ENCODE measurements at regions of chrX and their contacts with region 1.

Region 1: GRCh38 chrX:131841496-131842410 is 181.3 kb upstream of the STK26 start:
- DNase-seq: peak in 2 of 5 donors; percentile 31 to 38
- ATAC-seq: peak in 3 of 4 donors; percentile 37 to 81 (median 69)
- H3K4me3 ChIP-seq: no peak overlapping the region
- H3K27ac ChIP-seq: no peak overlapping the region
- H3K4me1 ChIP-seq: peaks cover 0 to 6% (median 0%) of the 10 kb centered on the region in 12 donors
- H3K27me3 ChIP-seq: peaks cover 0 to 61% (median 0%) of the 10 kb centered on the region in 9 donors
- CTCF ChIP-seq: peak; percentile 51 to 96 (median 75)
- POLR2A ChIP-seq: no peak

Region 2: GRCh38 chrX:132071260-132071659 is 229.5 kb after region 1 on chrX:
- intact Hi-C with region 1: loop called in 8 of 10 experiments (anchors 2 to 10 kb)
- DNase-seq: no peak
- ATAC-seq: no peak
- H3K4me3 ChIP-seq: no peak overlapping the region
- H3K27ac ChIP-seq: no peak overlapping the region
- H3K4me1 ChIP-seq: no peaks in the 10 kb centered on the region
- H3K27me3 ChIP-seq: peaks cover 0 to 18% (median 0%) of the 10 kb centered on the region in 9 donors
- CTCF ChIP-seq: peak in 5 of 12 donors; percentile 30 to 39 (median 34)
- POLR2A ChIP-seq: no peak

Region 3: GRCh38 chrX:132226169-132226568 is 384.4 kb after region 1 on chrX:
- intact Hi-C with region 1: loop called in 1 of 10 experiments (anchors 10 kb)
- DNase-seq: no peak
- ATAC-seq: no peak
- H3K4me3 ChIP-seq: no peak overlapping the region
- H3K27ac ChIP-seq: no peak overlapping the region
- H3K4me1 ChIP-seq: no peaks in the 10 kb centered on the region
- H3K27me3 ChIP-seq: peaks cover 0 to 21% (median 0%) of the 10 kb centered on the region in 9 donors
- CTCF ChIP-seq: peak in 8 of 12 donors; percentile 11 to 38 (median 28)
- POLR2A ChIP-seq: no peak

Region 4: GRCh38 chrX:132622130-132622529 is 780.4 kb after region 1 on chrX:
- intact Hi-C with region 1: loop called in 4 of 10 experiments (anchors 5 to 10 kb)
- DNase-seq: no peak
- ATAC-seq: no peak
- H3K4me3 ChIP-seq: no peak overlapping the region
- H3K27ac ChIP-seq: no peak overlapping the region
- H3K4me1 ChIP-seq: no peaks in the 10 kb centered on the region
- H3K27me3 ChIP-seq: peaks cover 0 to 45% (median 0%) of the 10 kb centered on the region in 9 donors
- CTCF ChIP-seq: no peak
- POLR2A ChIP-seq: no peak

Region 5: DNA sequence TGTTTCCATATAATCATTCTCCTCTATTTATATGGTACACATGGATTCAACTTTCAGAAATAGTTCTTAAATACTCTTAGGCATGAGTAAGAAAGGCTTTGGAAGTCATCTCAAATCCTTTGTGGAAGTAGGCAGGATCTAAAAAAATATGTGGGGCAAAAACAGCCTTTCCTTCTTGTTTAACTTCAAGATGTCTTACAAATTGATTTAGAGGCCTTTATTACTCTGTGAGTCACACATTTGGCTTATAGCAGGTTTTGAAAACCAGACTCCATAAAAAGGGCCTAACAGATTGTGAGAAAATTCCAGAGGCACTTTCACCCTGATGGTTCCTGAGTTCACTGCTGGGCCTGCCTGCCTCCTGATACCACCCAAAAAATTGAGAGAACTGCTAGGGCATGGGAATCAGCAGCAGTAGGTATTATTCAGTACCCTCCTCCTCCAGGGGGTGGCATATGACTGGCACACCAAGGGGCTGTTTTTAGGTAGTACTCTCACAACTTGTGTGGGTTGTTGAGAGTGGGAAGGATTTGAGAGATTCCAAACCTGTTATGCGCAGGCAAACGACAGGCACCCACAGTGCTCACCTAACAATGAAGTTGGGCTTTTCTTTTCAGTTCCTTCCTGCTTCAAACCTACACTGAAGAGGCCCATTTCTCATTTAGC is 809.8 kb after region 1 on chrX:
- intact Hi-C with region 1: no loop called
- DNase-seq: no peak
- ATAC-seq: no peak
- H3K4me3 ChIP-seq: no peak overlapping the region
- H3K27ac ChIP-seq: no peak overlapping the region
- H3K4me1 ChIP-seq: no peaks in the 10 kb centered on the region
- H3K27me3 ChIP-seq: peaks cover 0 to 23% (median 0%) of the 10 kb centered on the region in 9 donors
- CTCF ChIP-seq: no peak
- POLR2A ChIP-seq: no peak

Measured in heart left ventricle (tissue), 16 donors.